Activated T-helper 2 cell treated with anti-CD3 and anti-CD28 coated beads, Interferon-gamma antibody, Interleukin-2, Interleukin-4, amounts not matched to agents 10 μg/mL and 5 μg/mL and 100 μg/mL, durations not matched to agents 14 hours and 24 hours and 36 hours (primary cell): ENCODE measurements at regions of chr1 and their contacts with region 1.

Region 1: GRCh38 chr1:70134148-70134547 is 71.2 kb downstream of the LRRC40 start:
- DNase-seq: no peak
- H3K4me3 Mint-ChIP-seq: no peak overlapping the region
- H3K27ac Mint-ChIP-seq: no peak overlapping the region
- H3K4me1 Mint-ChIP-seq: no peaks in the 10 kb centered on the region
- H3K27me3 Mint-ChIP-seq: peaks cover 21% of the 10 kb centered on the region

Region 2: GRCh38 chr1:70169018-70169839 is 35.1 kb after region 1 on chr1:
- intact Hi-C with region 1: no loop called
- DNase-seq: no peak
- H3K4me3 Mint-ChIP-seq: no peak overlapping the region
- H3K27ac Mint-ChIP-seq: no peak overlapping the region
- H3K4me1 Mint-ChIP-seq: peaks cover 10% of the 10 kb centered on the region
- H3K27me3 Mint-ChIP-seq: no peaks in the 10 kb centered on the region

Region 3: DNA sequence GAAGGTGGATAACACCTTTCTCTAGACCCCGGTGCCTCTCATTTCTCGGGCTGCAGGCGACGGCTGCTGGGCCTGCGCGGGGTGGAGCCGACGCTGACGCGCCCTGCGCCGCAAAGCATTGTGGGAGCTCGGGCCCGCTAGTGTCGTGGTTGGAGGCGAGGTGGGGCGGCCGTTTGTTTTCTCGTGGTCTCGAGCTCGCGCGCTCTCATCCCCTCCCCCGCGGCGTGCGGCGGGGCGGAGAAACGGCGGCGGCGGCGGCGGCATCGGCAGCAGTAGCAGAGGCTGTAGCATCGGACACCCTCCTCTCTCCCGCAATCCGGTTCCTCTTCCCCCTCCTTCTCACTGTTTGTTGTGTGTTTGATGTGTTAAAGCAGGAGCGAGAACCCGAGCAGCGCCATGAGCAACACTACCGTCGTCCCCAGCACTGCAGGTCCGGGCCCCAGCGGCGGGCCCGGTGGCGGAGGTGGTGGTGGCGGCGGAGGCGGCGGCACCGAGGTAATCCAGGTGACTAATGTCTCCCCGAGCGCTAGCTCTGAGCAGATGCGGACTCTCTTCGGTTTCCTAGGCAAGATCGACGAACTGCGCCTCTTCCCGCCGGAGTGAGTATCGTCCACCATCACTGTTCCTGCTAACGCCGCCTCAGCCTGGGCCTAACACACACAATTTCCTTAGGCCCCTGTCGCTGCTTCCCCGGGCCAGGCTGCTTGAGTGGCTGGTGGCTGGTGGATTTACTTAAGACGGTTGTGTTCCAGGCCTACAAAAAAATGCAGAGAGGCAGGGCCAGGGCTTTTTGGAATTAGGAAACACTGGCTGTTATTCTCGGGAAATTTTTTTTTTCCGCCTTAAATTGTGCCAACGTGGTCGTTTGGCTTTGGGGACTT is 87.3 kb after region 1 on chr1 and contains the start of gene SRSF11:
- intact Hi-C with region 1: loop called (anchors 5 kb)
- DNase-seq: peak; percentile 95
- H3K4me3 Mint-ChIP-seq: peak within 1 kb of the TSS; percentile 93
- H3K27ac Mint-ChIP-seq: peak within 1 kb of the TSS; percentile 97
- H3K4me1 Mint-ChIP-seq: peaks cover 35% of the 10 kb centered on the region
- H3K27me3 Mint-ChIP-seq: no peaks in the 10 kb centered on the region
- total RNA-seq, gene SRSF11: 194 and 195 TPM in 2 replicates

Region 4: DNA sequence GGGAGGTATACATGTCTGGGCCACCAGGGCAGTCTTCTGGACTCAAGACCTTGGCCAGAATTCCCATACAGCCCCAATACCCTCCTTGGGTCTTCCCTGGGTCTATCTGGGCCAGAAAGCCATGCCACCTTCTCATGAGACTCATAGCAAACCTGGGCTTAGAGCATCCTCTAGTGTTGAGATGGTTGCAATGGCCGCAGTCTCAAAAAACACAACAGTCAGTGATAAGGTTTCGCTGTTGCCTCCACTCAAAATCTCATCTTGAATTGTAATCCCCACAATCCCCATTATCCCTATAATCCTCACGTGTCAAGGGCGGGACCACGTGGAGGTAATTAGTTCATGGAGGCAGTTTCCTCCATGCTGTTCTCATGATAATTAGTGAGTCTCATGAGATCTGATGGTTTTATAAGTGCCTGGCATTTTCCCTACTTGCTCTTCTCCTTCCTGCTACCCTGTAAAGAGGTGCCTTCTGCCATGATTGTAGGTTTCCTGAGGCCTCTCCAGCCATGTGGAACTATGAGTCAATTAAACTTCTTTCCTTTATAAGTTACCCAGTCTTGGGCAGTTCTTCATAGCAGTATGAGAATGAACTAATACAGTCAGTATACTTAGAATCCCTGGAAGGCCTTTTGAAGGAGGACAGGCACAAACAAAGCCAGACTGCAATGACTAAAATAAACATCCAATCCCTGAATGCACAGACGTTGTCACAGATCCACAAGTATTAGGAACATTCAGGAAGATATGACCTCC is 353.9 kb after region 1 on chr1:
- intact Hi-C with region 1: loop called (anchors 2 kb)
- DNase-seq: no peak
- H3K4me3 Mint-ChIP-seq: no peak overlapping the region
- H3K27ac Mint-ChIP-seq: no peak overlapping the region
- H3K4me1 Mint-ChIP-seq: no peaks in the 10 kb centered on the region
- H3K27me3 Mint-ChIP-seq: peaks cover 17% of the 10 kb centered on the region

Region 5: DNA sequence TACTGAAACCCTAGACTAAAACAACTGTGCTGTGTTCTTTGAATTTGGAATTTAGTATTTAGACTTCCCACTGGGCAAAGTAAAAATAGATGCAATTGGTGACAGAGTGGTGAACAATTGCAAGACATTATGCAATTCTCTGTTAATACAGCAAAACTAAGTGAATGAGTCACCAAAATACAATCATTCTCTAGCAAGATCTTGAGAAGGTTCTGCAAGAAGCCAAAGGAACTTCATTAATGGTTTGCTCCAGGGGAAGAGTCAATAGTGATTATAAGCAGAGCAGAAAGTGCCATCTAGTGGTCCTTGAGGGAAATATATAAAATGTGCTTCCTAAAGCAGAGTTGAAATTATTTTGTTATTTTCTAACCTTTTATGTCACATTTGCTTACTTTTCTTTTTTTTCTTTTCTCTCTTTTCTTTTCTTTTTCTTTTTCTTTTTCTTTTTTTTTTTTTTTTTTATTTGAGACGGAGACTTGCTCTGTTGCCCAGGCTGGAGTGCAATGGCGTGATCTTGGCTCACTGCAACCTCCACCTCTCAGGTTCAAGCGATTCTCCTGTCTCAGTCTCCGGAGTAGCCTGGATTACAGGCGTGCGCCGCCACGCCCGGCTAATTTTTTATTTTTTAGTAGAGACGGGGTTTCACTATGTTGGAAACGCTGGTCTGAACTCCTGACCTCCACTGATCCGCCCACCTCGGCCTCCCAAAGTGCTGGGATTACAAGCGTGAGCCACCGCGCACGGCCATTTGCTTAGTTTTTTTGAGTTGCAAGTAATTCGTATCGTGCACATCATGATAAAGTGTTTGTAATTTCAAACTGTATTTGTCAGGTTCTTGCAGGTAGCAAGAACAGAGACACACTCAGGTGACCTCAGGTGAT is 376.1 kb after region 1 on chr1:
- intact Hi-C with region 1: loop called (anchors 1 kb)
- DNase-seq: no peak
- H3K4me3 Mint-ChIP-seq: no peak overlapping the region
- H3K27ac Mint-ChIP-seq: no peak overlapping the region
- H3K4me1 Mint-ChIP-seq: peaks cover 2% of the 10 kb centered on the region
- H3K27me3 Mint-ChIP-seq: peaks cover 7% of the 10 kb centered on the region